RWPE1 (cell line): ENCODE measurements at regions of chr1 and their contacts with region 1.

Region 1: GRCh38 chr1:111399792-111400610 is 27.5 kb downstream of the OVGP1 start:
- DNase-seq: peak; percentile 60
- H3K27ac ChIP-seq: no peak overlapping the region
- CTCF ChIP-seq: peak; percentile 67

Region 2: GRCh38 chr1:111176678-111177077 is 223.3 kb before region 1 on chr1:
- CTCF ChIA-PET with region 1: no interaction called
- POLR2A ChIA-PET with region 1: no interaction called
- DNase-seq: no peak
- H3K27ac ChIP-seq: no peak overlapping the region
- CTCF ChIP-seq: no peak

Region 3: GRCh38 chr1:111222308-111223125 is 177.5 kb before region 1 on chr1:
- CTCF ChIA-PET with region 1: interaction called, 23 read pairs
- POLR2A ChIA-PET with region 1: no interaction called
- DNase-seq: peak; percentile 91
- H3K27ac ChIP-seq: no peak overlapping the region
- CTCF ChIP-seq: peak; percentile 94